Dorsolateral prefrontal cortex (tissue), 120 donors: ENCODE measurements at regions of chr2 and their contacts with region 1.

Region 1: GRCh38 chr2:85342156-85342555 is 12.2 kb downstream of the RETSAT start:
- DNase-seq: no peak
- H3K4me3 ChIP-seq: no peak overlapping the region
- H3K27ac ChIP-seq: no peak overlapping the region
- H3K27me3 ChIP-seq: peaks cover 0 to 3% (median 0%) of the 10 kb centered on the region in 45 donors
- CTCF ChIP-seq: no peak

Region 2: DNA sequence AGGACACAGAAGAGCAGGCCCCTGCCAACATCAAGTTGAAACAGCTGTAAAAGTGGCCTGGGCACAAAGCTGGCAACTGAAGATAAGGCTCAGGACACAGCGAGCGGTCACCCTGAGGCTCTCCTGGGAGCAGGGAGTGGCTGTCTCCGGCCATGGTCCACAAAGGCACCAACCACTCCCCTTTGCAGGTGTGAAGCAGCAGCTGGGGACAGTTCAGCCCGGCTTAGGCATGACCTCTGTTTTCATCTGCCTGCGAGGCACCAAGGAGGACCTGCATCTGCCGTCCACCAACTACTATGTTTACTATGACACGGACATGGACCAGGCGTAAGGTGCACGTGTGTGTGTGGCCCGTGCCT is 27.3 kb before region 1 on chr2:
- intact Hi-C with region 1: loop called in 1 of 2 experiments (anchors 2 kb)
- DNase-seq: no peak
- H3K4me3 ChIP-seq: no peak overlapping the region
- H3K27ac ChIP-seq: peak overlapping the region in 2 of 59 donors; percentile 4 to 60
- H3K27me3 ChIP-seq: no peaks in the 10 kb centered on the region
- CTCF ChIP-seq: no peak

Region 3: GRCh38 chr2:85878719-85879385 is 536.7 kb after region 1 on chr2:
- intact Hi-C with region 1: no loop called
- DNase-seq: no peak
- H3K4me3 ChIP-seq: no peak overlapping the region
- H3K27ac ChIP-seq: peak overlapping the region in 37 of 59 donors; percentile 0 to 71 (median 35)
- H3K27me3 ChIP-seq: no peaks in the 10 kb centered on the region
- CTCF ChIP-seq: no peak